ENCODE measurements at regions of chr11 and their contacts with region 1.

Region 1: GRCh38 chr11:70942593-70942992 is 309.8 kb downstream of the SHANK2 start:
- DNase-seq: no peak
- H3K4me3 ChIP-seq: no peak overlapping the region
- H3K27ac ChIP-seq: no peak overlapping the region
- H3K27me3 ChIP-seq: no peaks in the 10 kb centered on the region
- CTCF ChIP-seq: no peak

Region 2: DNA sequence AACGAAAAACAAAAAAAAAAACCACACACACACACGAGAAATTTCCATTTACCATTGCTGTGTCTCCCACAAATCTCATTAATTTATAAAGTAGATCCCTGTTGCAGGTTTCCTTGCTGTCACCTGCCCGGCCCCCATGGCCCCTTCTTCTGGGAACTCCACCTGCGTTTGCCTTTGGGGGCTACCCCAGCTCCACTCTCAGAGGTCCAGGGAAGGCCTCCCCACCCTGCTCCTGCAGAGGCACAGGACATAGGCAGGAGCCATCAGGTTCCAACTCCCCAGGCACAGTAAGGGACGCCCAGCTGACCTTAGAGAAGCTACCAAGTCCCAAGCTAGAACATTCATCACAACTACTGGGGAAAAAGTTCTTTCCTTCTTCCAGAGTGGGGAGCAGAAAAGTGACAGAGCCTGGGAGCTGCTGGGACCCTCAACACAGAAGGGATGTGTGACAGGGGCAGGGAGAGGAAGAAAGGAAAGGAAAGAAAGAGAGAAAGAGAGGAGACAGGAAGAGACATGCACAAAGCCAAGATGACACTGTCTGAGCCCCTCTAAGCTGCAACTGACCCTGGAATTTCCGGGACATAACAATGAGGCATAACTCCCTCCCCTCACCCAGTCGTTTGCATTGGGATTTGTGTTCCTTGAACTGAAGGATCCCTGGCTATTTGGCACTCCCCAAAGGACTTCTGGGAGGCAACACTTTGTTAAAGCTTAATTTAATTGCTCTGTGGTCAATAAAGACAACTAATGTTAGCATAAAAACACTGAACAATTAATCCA is 134.1 kb after region 1 on chr11:
- CTCF ChIA-PET with region 1: no interaction called
- POLR2A ChIA-PET with region 1: interaction called, 10 read pairs
- DNase-seq: no peak
- H3K4me3 ChIP-seq: no peak overlapping the region
- H3K27ac ChIP-seq: no peak overlapping the region
- H3K27me3 ChIP-seq: no peaks in the 10 kb centered on the region
- CTCF ChIP-seq: no peak

Region 3: DNA sequence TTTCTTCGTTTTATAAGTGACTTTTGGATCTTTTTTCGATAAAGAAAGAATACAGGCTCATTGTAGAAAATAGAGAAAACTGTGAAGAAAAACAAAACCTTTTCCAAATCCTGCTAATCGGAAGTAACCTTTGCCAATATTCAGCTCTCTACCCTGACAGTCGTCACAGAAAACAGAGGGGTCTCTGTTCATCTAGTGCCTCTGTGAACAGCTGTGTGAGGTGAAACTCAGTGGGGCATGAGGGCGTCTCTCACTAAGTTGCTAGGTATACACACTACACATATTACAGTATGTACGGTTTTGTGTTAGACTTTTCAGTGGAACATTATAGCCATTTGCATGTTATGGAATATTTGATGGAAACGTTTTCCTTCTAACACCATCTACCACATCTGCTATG is 466.2 kb after region 1 on chr11:
- CTCF ChIA-PET with region 1: no interaction called
- POLR2A ChIA-PET with region 1: no interaction called
- DNase-seq: no peak
- H3K4me3 ChIP-seq: no peak overlapping the region
- H3K27ac ChIP-seq: no peak overlapping the region
- H3K27me3 ChIP-seq: no peaks in the 10 kb centered on the region
- CTCF ChIP-seq: no peak